Sciatic nerve (tissue), 2 donors: ENCODE measurements at regions of chr7 and their contacts with region 1.

Region 1: DNA sequence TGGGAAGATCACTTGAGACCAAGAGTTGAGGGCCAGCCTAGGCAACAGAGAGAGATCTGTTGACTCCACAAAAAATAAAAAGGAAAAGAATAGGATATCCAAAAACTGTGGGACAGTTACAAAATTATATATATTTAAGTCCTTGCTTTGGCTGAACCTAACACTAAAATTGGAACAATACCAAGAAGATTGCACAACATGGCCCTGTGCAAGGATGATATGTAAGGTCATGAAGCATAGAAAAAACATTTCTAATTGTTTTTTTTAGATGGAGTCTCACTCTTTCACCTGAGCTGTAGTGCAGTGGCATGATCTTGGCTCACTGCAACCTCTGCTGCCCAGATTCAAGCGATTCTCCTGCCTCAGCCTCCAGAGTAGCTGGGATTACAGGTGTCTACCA is 139.0 kb downstream of the TPST1 start:
- DNase-seq: no peak
- ATAC-seq: no peak

Region 2: DNA sequence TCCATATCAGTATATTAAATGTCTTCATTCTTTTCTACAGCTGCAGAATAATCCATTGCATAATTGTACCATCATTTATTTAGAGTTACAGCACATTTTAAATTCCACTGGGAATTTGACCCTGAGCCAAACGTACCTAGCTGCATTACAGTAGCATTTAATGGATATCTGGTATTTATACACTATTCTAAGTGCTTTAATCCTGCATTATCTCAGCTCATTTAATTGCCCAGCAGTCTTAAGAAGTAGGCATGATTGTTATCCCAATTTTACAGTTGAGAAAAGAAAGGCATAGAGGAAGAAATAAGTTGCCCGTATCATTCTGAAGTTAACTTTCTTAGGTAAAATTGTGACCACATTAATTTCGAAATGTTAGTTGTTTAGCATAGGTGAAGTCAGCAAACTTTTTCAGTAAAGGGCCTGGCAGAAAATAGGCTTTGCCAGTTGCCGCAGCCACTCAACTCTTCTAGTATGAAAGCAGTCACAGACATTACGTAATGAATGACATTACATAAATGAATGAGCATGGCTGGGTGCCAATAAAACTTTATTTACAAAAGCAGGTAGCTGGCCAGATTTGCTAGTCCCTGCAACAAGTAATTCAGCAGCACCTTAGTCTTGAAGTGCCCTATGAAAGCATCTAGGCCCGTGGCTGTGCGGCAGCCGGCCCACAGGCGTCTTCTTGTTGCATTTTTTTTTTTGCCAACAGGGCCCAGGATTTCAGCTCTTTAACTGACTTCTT is 392.2 kb before region 1 on chr7:
- intact Hi-C with region 1: no loop called
- DNase-seq: no peak
- ATAC-seq: no peak

Region 3: GRCh38 chr7:66163186-66163610 is 181.0 kb before region 1 on chr7:
- intact Hi-C with region 1: loop called (anchors 5 kb)
- DNase-seq: no peak
- ATAC-seq: no peak

Region 4: DNA sequence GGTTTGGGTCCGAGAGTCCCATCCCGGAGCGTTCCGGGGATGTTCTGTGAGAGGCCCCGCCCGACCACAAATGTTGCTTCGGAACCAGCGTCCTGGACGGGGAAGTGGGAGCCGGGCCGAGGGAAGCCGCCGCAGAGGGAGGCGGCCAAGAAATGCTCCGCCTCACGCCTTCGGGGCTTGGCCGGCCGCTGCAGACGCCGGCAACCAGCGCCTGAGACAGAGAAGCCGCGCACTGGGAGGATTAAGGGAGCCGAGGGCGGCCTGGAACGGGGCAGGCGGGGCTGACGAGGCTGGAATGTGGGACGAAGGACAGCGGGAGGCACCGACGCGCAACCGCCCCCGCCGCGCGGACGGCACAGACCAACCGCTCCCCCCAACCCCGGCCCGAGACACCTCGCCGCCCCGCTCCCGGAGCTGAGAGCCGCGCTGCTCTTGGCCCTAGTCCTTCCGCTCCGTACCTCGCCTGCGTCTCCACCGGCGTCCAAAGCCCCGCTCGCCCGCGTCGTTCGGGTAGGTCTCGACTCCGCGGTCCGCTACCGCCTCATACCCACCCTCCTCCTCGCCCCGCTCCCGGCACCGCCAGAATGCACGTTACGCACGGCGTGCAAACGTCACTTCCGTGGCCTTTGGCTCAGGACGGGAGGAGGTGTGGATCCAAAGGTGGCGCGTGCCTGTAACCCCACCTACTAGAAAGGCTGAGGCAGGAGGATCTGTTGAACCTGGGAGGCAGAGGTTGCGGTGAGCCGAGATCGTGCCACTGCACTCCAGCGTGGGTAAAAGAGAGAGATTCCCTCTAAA is 247.8 kb after region 1 on chr7:
- intact Hi-C with region 1: no loop called
- DNase-seq: peak; percentile 94
- ATAC-seq: peak; percentile 98